MCF 10A (cell line): ENCODE measurements at regions of chr14 and their contacts with region 1.

Region 1: GRCh38 chr14:64758691-64759584 is 54.7 kb downstream of the PLEKHG3 start:
- DNase-seq: peak; percentile 65
- H3K4me3 Mint-ChIP-seq: peak overlapping the region; percentile 20
- H3K27ac Mint-ChIP-seq: peak overlapping the region; percentile 47
- H3K4me1 Mint-ChIP-seq: peaks cover 90% of the 10 kb centered on the region
- H3K27me3 Mint-ChIP-seq: no peaks in the 10 kb centered on the region
- CTCF ChIP-seq: no peak

Region 2: DNA sequence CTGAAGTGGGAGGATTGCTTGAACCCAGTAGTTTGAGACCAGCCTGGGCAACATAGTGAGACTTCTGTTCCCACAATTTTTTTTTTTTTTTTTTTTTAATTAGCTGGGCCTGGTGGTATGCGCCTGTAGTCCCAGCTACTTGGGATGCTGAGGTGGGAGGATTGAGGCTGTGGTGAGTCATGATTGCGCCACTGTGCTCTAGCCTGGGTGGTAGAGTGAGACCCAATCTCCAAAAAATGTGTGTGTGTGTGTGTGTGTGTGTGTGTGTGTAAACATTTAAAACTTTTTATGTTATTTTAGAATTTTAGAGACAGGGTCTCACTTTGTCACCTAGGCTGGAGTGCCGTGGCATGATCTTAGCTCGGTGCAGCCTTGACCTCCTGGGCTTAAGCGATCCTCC is 202.4 kb before region 1 on chr14:
- CTCF ChIA-PET with region 1: no interaction called
- POLR2A ChIA-PET with region 1: no interaction called
- intact Hi-C with region 1: no loop called
- DNase-seq: peak; percentile 80
- H3K4me3 Mint-ChIP-seq: no peak overlapping the region
- H3K27ac Mint-ChIP-seq: no peak overlapping the region
- H3K4me1 Mint-ChIP-seq: peaks cover 2% of the 10 kb centered on the region
- H3K27me3 Mint-ChIP-seq: no peaks in the 10 kb centered on the region
- CTCF ChIP-seq: no peak

Region 3: GRCh38 chr14:64720131-64720576 is 38.8 kb before region 1 on chr14:
- CTCF ChIA-PET with region 1: interaction called, 3 read pairs
- POLR2A ChIA-PET with region 1: interaction called, 19 read pairs
- intact Hi-C with region 1: loop called (anchors 5 kb)
- DNase-seq: peak; percentile 95
- H3K4me3 Mint-ChIP-seq: peak overlapping the region; percentile 34
- H3K27ac Mint-ChIP-seq: peak overlapping the region; percentile 97
- H3K4me1 Mint-ChIP-seq: peaks cover 84% of the 10 kb centered on the region
- H3K27me3 Mint-ChIP-seq: no peaks in the 10 kb centered on the region
- CTCF ChIP-seq: no peak

Region 4: GRCh38 chr14:64726585-64726890 is 32.4 kb before region 1 on chr14:
- CTCF ChIA-PET with region 1: interaction called, 3 read pairs
- POLR2A ChIA-PET with region 1: interaction called, 19 read pairs
- intact Hi-C with region 1: loop called (anchors 5 kb)
- DNase-seq: peak; percentile 87
- H3K4me3 Mint-ChIP-seq: peak overlapping the region; percentile 23
- H3K27ac Mint-ChIP-seq: peak overlapping the region; percentile 90
- H3K4me1 Mint-ChIP-seq: peaks cover 34% of the 10 kb centered on the region
- H3K27me3 Mint-ChIP-seq: no peaks in the 10 kb centered on the region
- CTCF ChIP-seq: no peak

Region 5: DNA sequence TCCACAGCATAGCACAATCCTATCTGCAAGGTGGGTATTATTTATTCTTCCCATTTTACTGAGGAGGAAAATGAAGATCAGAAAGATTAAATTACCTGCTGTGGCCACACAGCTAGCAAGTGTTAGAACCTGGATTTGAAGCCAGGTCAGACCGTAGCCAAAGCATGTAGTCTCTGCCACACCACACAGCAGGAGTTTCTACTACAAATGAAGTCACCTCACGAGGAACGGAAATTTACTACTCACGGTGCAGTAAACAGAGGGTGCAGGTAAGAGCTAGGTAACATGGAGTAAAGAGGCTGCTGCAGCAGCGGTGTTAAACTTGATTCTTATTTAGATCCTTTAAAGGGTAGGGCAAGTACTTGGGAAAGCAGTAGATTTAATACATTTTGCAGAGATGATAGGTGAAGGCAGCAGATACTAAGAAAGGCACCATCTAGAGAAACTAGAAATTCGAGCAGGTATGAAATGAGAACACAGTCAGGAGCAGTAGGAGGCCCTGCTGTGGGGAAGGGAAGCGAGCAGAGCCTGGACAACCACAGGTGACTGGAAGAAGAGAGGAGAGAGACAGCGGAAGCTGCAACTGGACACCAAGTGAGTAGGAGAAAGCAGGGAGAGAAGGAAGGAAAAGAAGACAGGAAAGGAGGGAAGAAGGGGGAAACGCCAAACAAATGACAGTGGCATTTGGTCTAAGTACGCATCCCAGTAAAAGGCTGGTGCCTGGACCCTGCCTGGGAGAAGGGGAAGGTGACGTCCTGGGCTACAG is 99.2 kb after region 1 on chr14:
- CTCF ChIA-PET with region 1: no interaction called
- POLR2A ChIA-PET with region 1: no interaction called
- intact Hi-C with region 1: no loop called
- DNase-seq: no peak
- H3K4me3 Mint-ChIP-seq: no peak overlapping the region
- H3K27ac Mint-ChIP-seq: no peak overlapping the region
- H3K4me1 Mint-ChIP-seq: no peaks in the 10 kb centered on the region
- H3K27me3 Mint-ChIP-seq: peaks cover 29% of the 10 kb centered on the region
- CTCF ChIP-seq: no peak

Region 6: DNA sequence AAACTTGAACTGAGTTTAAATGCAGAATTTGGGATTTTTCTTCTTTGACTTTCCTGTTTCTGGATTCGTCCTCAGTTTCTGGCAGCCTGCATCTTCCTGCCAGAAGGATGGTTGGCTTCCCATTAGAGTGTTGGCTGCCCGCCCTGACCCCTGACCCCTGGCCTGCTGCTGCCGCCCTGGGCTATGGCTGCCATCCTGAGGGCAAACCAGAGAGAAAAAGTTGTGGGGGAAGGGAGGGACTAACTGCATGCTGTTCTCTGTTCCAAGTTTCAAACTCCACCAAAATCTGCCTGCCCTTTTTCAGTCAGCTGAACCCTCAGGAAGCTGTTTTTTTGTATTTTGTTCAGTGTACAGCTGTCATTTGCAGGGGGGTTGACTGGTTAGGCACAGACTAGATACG is 276.1 kb after region 1 on chr14:
- CTCF ChIA-PET with region 1: no interaction called
- POLR2A ChIA-PET with region 1: no interaction called
- intact Hi-C with region 1: no loop called
- DNase-seq: no peak
- H3K4me3 Mint-ChIP-seq: no peak overlapping the region
- H3K27ac Mint-ChIP-seq: no peak overlapping the region
- H3K4me1 Mint-ChIP-seq: peaks cover 5% of the 10 kb centered on the region
- H3K27me3 Mint-ChIP-seq: no peaks in the 10 kb centered on the region
- CTCF ChIP-seq: no peak